Activated CD8-positive, alpha-beta T cell treated with anti-CD3 and anti-CD28 coated beads for 36 hours (primary cell): ENCODE measurements at regions of chr4 and their contacts with region 1.

Region 1: GRCh38 chr4:185096032-185096653 is 46.9 kb upstream of the SLC25A4 start:
- DNase-seq: peak; percentile 44
- ATAC-seq: no peak
- H3K4me3 Mint-ChIP-seq: no peak overlapping the region
- H3K27ac Mint-ChIP-seq: no peak overlapping the region
- H3K4me1 Mint-ChIP-seq: no peaks in the 10 kb centered on the region
- H3K27me3 Mint-ChIP-seq: peaks cover 12% of the 10 kb centered on the region
- CTCF ChIP-seq: peak; percentile 65

Region 2: DNA sequence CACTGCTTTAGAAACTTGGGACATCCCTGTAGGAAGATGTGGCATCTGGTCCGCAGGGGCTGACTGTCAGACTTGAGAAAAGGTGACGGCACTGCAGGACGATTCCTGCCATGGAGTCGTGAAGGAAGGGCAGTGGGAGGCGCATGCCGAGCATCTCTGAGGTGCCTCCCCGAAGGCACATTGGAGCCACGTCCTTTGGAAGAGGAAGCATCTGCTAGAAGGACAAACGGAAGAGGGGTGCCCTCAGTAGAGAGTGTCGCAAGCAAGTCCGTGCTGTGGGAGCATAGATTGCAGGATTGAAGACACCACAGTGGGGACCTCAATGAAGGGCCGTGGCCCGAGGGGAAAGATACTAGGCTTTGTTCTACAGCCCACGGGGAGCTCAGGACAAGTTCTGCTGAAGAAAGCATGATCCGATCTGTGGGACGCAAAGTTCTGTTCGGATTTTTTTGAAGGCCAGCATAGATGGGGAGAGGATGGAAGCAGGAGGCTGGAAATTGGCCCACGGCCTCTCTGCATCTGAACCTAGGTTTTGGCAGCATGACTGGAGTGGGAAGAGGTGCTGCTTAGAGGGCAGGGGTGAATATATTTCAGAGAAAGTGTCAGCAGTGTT is 102.0 kb before region 1 on chr4:
- CTCF ChIA-PET with region 1: no interaction called
- POLR2A ChIA-PET with region 1: no interaction called
- intact Hi-C with region 1: no loop called
- DNase-seq: no peak
- ATAC-seq: no peak
- H3K4me3 Mint-ChIP-seq: no peak overlapping the region
- H3K27ac Mint-ChIP-seq: no peak overlapping the region
- H3K4me1 Mint-ChIP-seq: no peaks in the 10 kb centered on the region
- H3K27me3 Mint-ChIP-seq: no peaks in the 10 kb centered on the region
- CTCF ChIP-seq: no peak

Region 3: GRCh38 chr4:185005216-185005819 is 90.8 kb before region 1 on chr4:
- CTCF ChIA-PET with region 1: interaction called, 13 read pairs
- POLR2A ChIA-PET with region 1: interaction called, 3 read pairs
- intact Hi-C with region 1: no loop called
- DNase-seq: peak; percentile 92
- ATAC-seq: peak; percentile 97
- H3K4me3 Mint-ChIP-seq: peak overlapping the region; percentile 1
- H3K27ac Mint-ChIP-seq: no peak overlapping the region
- H3K4me1 Mint-ChIP-seq: peaks cover 3% of the 10 kb centered on the region
- H3K27me3 Mint-ChIP-seq: peaks cover 39% of the 10 kb centered on the region
- CTCF ChIP-seq: peak; percentile 87

Region 4: DNA sequence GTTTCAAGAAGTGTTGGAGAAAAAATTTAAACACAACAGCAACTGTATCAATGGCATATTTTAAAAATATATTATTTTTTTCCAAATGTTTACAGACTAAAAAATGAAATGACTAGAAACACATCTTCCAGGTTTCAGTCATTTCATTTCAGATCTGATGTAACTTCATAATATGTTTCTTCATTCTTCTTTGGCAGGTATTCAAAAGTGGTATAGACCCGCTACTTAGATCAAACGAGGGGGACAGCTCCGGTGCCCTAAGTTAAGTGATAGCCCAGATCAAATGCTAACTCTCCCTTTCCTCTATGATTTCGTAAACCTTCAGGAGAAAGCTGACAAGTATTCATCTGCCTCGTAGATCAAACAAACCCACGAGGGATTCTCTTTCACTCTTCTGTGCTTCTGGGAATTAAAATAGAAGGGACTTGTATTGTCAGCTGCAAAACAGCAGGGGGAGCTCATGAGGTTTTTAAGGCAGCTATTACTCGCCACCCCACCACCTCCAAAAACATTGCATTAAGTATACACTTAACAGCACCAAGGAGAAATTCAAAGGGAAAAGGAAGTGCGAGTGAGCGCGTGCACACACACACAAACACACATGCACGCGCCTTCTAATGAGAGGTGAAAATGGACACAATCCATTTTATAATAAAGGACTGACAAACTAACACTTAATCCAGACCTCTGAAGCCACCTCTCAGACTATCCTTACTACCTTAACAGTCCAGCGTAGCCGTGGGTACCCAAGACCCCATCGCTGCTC is 56.5 kb before region 1 on chr4:
- CTCF ChIA-PET with region 1: interaction called, 78 read pairs
- POLR2A ChIA-PET with region 1: no interaction called
- intact Hi-C with region 1: loop called (anchors 5 kb)
- DNase-seq: peak; percentile 67
- ATAC-seq: peak; percentile 95
- H3K4me3 Mint-ChIP-seq: peak overlapping the region; percentile 71
- H3K27ac Mint-ChIP-seq: peak overlapping the region; percentile 81
- H3K4me1 Mint-ChIP-seq: peaks cover 12% of the 10 kb centered on the region
- H3K27me3 Mint-ChIP-seq: peaks cover 4% of the 10 kb centered on the region
- CTCF ChIP-seq: peak; percentile 77

Region 5: GRCh38 chr4:185082561-185082960 is 13.6 kb before region 1 on chr4:
- CTCF ChIA-PET with region 1: interaction called, 17 read pairs
- POLR2A ChIA-PET with region 1: no interaction called
- intact Hi-C with region 1: no loop called
- DNase-seq: no peak
- ATAC-seq: no peak
- H3K4me3 Mint-ChIP-seq: no peak overlapping the region
- H3K27ac Mint-ChIP-seq: no peak overlapping the region
- H3K4me1 Mint-ChIP-seq: no peaks in the 10 kb centered on the region
- H3K27me3 Mint-ChIP-seq: peaks cover 12% of the 10 kb centered on the region
- CTCF ChIP-seq: no peak

Region 6: GRCh38 chr4:185106353-185106752 is 10.2 kb after region 1 on chr4:
- CTCF ChIA-PET with region 1: interaction called, 12 read pairs
- POLR2A ChIA-PET with region 1: no interaction called
- intact Hi-C with region 1: no loop called
- DNase-seq: no peak
- ATAC-seq: no peak
- H3K4me3 Mint-ChIP-seq: no peak overlapping the region
- H3K27ac Mint-ChIP-seq: no peak overlapping the region
- H3K4me1 Mint-ChIP-seq: no peaks in the 10 kb centered on the region
- H3K27me3 Mint-ChIP-seq: peaks cover 8% of the 10 kb centered on the region
- CTCF ChIP-seq: no peak

Region 7: DNA sequence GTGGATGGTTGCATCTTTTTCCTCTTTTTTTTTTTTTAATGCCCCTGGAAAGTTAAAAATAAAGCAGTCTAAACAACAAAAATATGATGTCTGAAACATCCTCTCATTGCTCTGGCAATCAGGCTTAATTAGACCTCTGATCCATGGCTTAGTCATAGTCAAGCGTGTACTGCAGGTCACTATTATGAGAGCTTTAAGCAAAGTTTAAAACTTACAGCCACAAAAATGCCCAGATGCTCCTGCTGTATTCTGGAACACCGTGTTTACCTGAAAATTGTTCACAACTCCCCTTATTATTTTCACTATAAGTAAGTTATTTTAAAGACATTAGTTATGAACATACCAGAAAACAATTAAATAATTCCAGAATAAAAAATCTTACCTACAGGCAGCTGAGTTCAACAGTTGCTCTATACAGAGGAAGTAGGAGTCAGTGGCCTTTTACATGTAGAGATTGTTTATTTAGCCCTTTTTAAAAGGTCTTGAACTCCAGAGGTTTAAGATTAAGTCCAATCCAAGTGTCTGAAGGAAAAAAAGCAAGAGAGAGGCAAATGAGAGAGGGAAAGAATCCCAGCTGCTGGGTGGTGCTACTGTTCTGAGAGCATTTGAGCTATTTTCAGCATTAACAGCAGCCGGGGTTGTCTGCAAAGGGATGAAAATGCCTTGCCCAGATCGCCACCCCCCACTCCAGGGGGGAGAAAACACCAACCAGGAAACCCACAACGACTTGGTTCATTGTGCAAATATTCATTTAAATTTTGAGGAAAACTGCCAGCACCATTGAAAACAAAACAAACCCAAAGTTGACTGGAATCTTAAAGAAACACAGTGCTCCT is 678.9 kb after region 1 on chr4:
- CTCF ChIA-PET with region 1: no interaction called
- POLR2A ChIA-PET with region 1: no interaction called
- intact Hi-C with region 1: no loop called
- DNase-seq: no peak
- ATAC-seq: no peak
- H3K4me3 Mint-ChIP-seq: no peak overlapping the region
- H3K27ac Mint-ChIP-seq: no peak overlapping the region
- H3K4me1 Mint-ChIP-seq: no peaks in the 10 kb centered on the region
- H3K27me3 Mint-ChIP-seq: peaks cover 11% of the 10 kb centered on the region
- CTCF ChIP-seq: no peak